OCI-LY7 (cell line): ENCODE measurements at regions of chr5 and their contacts with region 1.

Region 1: GRCh38 chr5:157130925-157131324 is 11.7 kb downstream of the MED7 start:
- DNase-seq: peak; percentile 66
- H3K4me3 ChIP-seq: no peak overlapping the region
- H3K27ac ChIP-seq: peak overlapping the region; percentile 40
- H3K4me1 ChIP-seq: peaks cover 50% of the 10 kb centered on the region
- CTCF ChIP-seq: no peak

Region 2: DNA sequence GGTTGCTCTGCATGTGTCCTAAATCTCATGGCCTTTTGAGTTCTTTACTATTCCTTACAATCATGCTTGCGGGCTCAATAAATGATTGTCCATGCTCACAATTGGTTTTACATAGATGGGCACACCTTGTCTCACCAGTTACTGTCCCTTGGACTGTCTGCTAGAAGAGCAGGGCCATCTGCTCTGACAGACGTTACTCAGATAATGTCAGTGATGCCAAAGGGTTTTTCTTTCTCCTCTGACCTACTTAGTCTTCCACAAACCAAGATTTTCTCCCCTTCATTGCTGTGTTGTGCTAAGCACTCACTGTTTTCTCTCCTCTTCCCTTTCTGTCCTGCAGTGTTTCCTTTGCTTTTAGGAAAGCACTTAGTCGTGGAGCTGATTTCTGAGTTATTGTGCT is 1555.1 kb before region 1 on chr5:
- CTCF ChIA-PET with region 1: no interaction called
- POLR2A ChIA-PET with region 1: no interaction called
- intact Hi-C with region 1: no loop called
- DNase-seq: no peak
- H3K4me3 ChIP-seq: no peak overlapping the region
- H3K27ac ChIP-seq: no peak overlapping the region
- H3K4me1 ChIP-seq: no peaks in the 10 kb centered on the region
- CTCF ChIP-seq: no peak

Region 3: DNA sequence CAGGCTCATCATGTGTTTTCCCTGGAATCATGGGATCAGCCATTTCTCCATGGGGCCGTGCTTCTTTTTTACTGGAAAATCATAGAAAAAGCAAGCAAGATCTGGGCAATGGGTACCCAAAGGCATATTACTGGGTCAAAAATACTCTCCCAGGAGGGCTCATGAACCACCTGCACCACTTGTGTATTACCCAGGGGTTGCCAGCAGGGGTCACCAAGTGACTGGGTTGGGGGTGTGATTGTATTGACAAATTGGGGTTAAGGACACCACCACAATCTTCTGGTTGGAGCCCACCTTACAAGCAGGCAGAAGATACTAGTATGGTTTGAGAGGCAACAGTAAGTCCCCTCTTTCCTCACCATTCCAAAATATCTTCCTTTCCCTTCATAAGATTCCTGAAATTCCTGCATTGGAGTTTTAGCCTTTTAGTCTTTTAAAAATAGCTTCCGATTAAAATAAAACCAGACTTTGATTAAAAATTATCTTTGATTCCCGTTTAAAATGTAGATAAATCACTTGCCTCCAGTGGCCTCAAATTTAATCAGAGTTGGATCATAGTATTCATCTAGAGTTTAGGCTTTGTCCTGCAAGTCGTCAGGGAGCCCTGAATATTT is 1514.0 kb before region 1 on chr5:
- CTCF ChIA-PET with region 1: no interaction called
- POLR2A ChIA-PET with region 1: no interaction called
- intact Hi-C with region 1: loop called (anchors 5 kb)
- DNase-seq: peak; percentile 46
- H3K4me3 ChIP-seq: no peak overlapping the region
- H3K27ac ChIP-seq: no peak overlapping the region
- H3K4me1 ChIP-seq: no peaks in the 10 kb centered on the region
- CTCF ChIP-seq: peak; percentile 86

Region 4: DNA sequence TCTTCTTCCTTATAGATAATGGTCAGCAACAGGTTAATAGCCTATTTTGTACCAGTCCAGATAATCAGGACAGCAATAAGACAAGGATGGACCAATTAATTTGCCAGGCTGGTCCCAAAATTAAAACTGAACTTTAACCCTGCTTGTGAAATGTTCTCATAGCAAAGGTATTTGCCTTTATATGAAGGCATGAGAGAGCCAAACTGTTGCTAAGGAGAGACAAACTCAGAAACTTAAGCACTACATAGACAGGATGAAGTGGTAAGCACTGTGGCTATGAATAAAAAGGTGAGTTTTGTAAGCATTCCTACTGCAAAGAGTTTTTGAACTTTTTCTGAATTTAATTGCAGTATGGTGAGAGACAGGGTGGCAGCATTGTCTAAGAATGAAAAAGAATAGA is 455.5 kb before region 1 on chr5:
- CTCF ChIA-PET with region 1: no interaction called
- POLR2A ChIA-PET with region 1: no interaction called
- intact Hi-C with region 1: loop called (anchors 5 kb)
- DNase-seq: no peak
- H3K4me3 ChIP-seq: no peak overlapping the region
- H3K27ac ChIP-seq: no peak overlapping the region
- H3K4me1 ChIP-seq: no peaks in the 10 kb centered on the region
- CTCF ChIP-seq: no peak

Region 5: GRCh38 chr5:156963125-156963524 is 167.8 kb before region 1 on chr5 and contains the start of gene TIMD4:
- CTCF ChIA-PET with region 1: no interaction called
- POLR2A ChIA-PET with region 1: no interaction called
- intact Hi-C with region 1: no loop called
- DNase-seq: no peak
- H3K4me3 ChIP-seq: no peak within 1 kb of the TSS
- H3K27ac ChIP-seq: no peak within 1 kb of the TSS
- H3K4me1 ChIP-seq: peaks cover 41% of the 10 kb centered on the region
- CTCF ChIP-seq: no peak
- total RNA-seq, gene TIMD4: 0.82 and 1.1 TPM in 2 replicates

Region 6: DNA sequence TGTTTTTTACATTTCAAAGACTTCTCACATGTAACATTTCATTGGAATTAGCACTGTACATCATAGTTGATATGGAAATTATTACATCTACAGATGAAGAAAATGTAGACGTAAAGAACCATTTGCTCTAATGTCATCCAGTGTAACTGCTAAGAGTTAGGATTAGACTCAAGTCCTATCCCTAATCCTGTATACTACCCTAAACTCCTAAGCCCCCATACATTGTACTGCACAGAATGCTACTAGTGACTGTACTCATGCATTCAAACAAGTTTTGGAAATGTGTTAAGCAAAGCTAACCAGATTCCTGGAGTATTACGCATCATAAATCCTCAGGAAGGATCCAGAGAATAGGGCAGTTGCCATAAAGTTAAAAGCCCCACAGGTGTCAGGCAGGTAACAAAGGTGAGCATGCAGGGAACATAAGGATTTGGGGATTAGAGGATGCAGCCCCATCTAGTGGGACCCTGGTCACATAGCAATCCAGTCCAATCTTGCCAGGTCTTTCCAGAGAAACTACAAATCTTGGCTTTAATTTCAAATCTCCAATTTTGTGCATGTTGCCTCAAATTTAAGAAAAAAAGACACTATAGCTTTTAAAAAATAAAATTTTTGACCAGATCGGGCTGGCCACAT is 104.0 kb before region 1 on chr5:
- CTCF ChIA-PET with region 1: no interaction called
- POLR2A ChIA-PET with region 1: interaction called, 3 read pairs
- intact Hi-C with region 1: loop called (anchors 1 kb)
- DNase-seq: peak; percentile 64
- H3K4me3 ChIP-seq: no peak overlapping the region
- H3K27ac ChIP-seq: no peak overlapping the region
- H3K4me1 ChIP-seq: peaks cover 59% of the 10 kb centered on the region
- CTCF ChIP-seq: peak; percentile 97